ENCODE measurements at regions of chr11 and their contacts with region 1.

Region 1: GRCh38 chr11:60345489-60345888 is 18.4 kb downstream of the MS4A6E start:
- DNase-seq: peak; percentile 17 to 64
- H3K4me3 ChIP-seq: no peak overlapping the region
- H3K27ac ChIP-seq: no peak overlapping the region
- H3K4me1 ChIP-seq: peaks cover 0 to 4% (median 0%) of the 10 kb centered on the region in 4 experiments; a peak in 1 of 7 replicates
- H3K27me3 ChIP-seq: no peaks in the 10 kb centered on the region
- CTCF ChIP-seq: peak; percentile 48 to 83 (median 66)
- EP300 ChIP-seq: no peak
- POLR2A ChIP-seq: no peak
- RAD21 ChIP-seq: peak; percentile 79 to 83

Region 2: GRCh38 chr11:59999691-60000090 is 345.8 kb before region 1 on chr11:
- CTCF ChIA-PET with region 1: no interaction called
- POLR2A ChIA-PET with region 1: no interaction called
- DNase-seq: no peak
- H3K4me3 ChIP-seq: no peak overlapping the region
- H3K27ac ChIP-seq: no peak overlapping the region
- H3K4me1 ChIP-seq: no peaks in the 10 kb centered on the region
- H3K27me3 ChIP-seq: no peaks in the 10 kb centered on the region
- CTCF ChIP-seq: no peak
- EP300 ChIP-seq: no peak
- POLR2A ChIP-seq: no peak
- RAD21 ChIP-seq: no peak

Region 3: GRCh38 chr11:60265373-60266214 is 79.9 kb before region 1 on chr11:
- CTCF ChIA-PET with region 1: interaction called, 109 read pairs
- POLR2A ChIA-PET with region 1: no interaction called
- DNase-seq: no peak
- H3K4me3 ChIP-seq: no peak overlapping the region
- H3K27ac ChIP-seq: no peak overlapping the region
- H3K4me1 ChIP-seq: peaks cover 0 to 3% (median 0%) of the 10 kb centered on the region in 4 experiments; a peak in 1 of 7 replicates
- H3K27me3 ChIP-seq: no peaks in the 10 kb centered on the region; a peak in 1 of 7 replicates
- CTCF ChIP-seq: peak in 2 of 3 experiments; percentile 60 to 66; a peak in 3 of 4 replicates
- EP300 ChIP-seq: no peak
- POLR2A ChIP-seq: no peak
- RAD21 ChIP-seq: peak; percentile 92

Region 4: GRCh38 chr11:60334005-60334620 is 11.4 kb before region 1 on chr11:
- CTCF ChIA-PET with region 1: interaction called, 73 read pairs
- POLR2A ChIA-PET with region 1: interaction called, 3 read pairs
- DNase-seq: peak; percentile 50 to 94
- H3K4me3 ChIP-seq: no peak overlapping the region
- H3K27ac ChIP-seq: no peak overlapping the region
- H3K4me1 ChIP-seq: no peaks in the 10 kb centered on the region; a peak in 2 of 7 replicates
- H3K27me3 ChIP-seq: no peaks in the 10 kb centered on the region
- CTCF ChIP-seq: peak; percentile 27 to 75 (median 72)
- EP300 ChIP-seq: no peak
- POLR2A ChIP-seq: no peak
- RAD21 ChIP-seq: peak; percentile 48 to 65; a peak in 3 of 4 replicates

Region 5: DNA sequence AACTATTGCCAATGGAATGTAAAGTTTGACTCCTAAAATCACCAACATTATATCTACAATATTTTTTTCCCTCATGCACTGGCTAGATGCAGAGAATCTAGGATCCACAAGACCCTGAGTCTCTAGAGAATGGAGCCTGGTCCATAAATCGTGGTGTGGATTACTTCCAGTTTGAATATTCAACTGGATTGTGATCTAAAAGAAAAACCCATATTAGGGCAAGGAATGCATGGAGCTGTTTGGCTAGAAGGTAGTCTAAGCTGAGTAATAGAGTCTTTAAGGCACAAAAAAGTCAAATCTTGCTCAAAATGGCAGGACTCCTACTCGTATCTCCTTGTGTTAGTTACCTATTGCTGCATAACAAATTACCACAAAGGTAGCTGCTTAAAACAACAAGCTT is 74.5 kb after region 1 on chr11:
- CTCF ChIA-PET with region 1: no interaction called
- POLR2A ChIA-PET with region 1: no interaction called
- DNase-seq: no peak
- H3K4me3 ChIP-seq: no peak overlapping the region
- H3K27ac ChIP-seq: no peak overlapping the region
- H3K4me1 ChIP-seq: no peaks in the 10 kb centered on the region
- H3K27me3 ChIP-seq: no peaks in the 10 kb centered on the region
- CTCF ChIP-seq: no peak
- EP300 ChIP-seq: no peak
- POLR2A ChIP-seq: no peak
- RAD21 ChIP-seq: no peak

Region 6: GRCh38 chr11:60609632-60610031 is 264.1 kb after region 1 on chr11:
- CTCF ChIA-PET with region 1: interaction called, 12 read pairs
- POLR2A ChIA-PET with region 1: no interaction called
- DNase-seq: no peak
- H3K4me3 ChIP-seq: no peak overlapping the region
- H3K27ac ChIP-seq: no peak overlapping the region
- H3K4me1 ChIP-seq: no peaks in the 10 kb centered on the region
- H3K27me3 ChIP-seq: no peaks in the 10 kb centered on the region
- CTCF ChIP-seq: no peak
- EP300 ChIP-seq: no peak
- POLR2A ChIP-seq: no peak
- RAD21 ChIP-seq: no peak

Region 7: GRCh38 chr11:60634126-60634525 is 288.6 kb after region 1 on chr11:
- CTCF ChIA-PET with region 1: interaction called, 29 read pairs
- POLR2A ChIA-PET with region 1: no interaction called
- DNase-seq: peak in 1 of 2 experiments; percentile 66
- H3K4me3 ChIP-seq: no peak overlapping the region
- H3K27ac ChIP-seq: no peak overlapping the region
- H3K4me1 ChIP-seq: no peaks in the 10 kb centered on the region
- H3K27me3 ChIP-seq: no peaks in the 10 kb centered on the region
- CTCF ChIP-seq: peak; percentile 62 to 86 (median 65)
- EP300 ChIP-seq: no peak
- POLR2A ChIP-seq: no peak
- RAD21 ChIP-seq: peak; percentile 82 to 86

Measured in H1 (cell line).